ENCODE measurements at regions of chr4 and their contacts with region 1.

Region 1: GRCh38 chr4:876780-877179 is 50.9 kb upstream of the CPLX1 start:
- DNase-seq: no peak
- H3K4me3 Mint-ChIP-seq: no peak overlapping the region
- H3K27ac Mint-ChIP-seq: no peak overlapping the region
- H3K4me1 Mint-ChIP-seq: peaks cover 27% of the 10 kb centered on the region
- H3K27me3 Mint-ChIP-seq: no peaks in the 10 kb centered on the region

Region 2: DNA sequence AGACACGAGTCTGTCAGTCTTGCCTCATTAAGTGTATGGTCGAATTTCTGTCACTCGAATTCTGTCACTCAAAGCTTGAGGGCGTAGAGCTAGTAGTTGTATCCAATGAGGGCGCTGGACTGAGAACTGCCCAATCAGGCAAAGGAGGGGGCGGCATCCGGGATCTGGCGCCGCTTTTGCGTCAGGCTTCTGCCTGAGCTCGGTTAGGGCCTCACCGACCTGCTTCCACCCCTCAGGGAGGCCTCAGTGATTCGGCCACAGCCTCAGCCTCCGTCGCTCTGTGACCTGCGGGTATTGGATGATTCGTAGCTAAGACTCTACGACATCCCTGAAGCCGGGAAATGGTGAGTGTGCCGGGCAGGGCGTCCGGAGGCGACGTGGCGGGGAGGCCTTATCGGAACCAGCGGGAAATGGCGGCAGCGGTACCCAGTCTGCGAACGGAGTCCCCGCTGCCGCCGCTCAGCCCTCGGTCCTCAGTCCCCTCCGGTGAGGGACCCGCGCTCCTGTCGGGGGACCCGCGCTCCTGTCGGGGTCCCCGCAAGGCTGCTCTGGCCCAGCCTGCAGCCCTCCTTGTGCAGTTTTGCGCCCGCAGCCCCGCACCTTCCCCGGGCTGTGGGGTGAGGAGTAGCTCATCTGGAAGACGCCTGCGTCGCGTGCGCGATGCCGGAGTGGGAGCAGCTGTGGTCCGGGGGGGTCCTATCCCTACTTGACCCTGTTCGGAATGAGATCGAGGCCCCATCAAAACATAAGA is 664.2 kb before region 1 on chr4:
- CTCF ChIA-PET with region 1: no interaction called
- intact Hi-C with region 1: no loop called
- DNase-seq: no peak
- H3K4me3 Mint-ChIP-seq: no peak overlapping the region
- H3K27ac Mint-ChIP-seq: no peak overlapping the region
- H3K4me1 Mint-ChIP-seq: peaks cover 23% of the 10 kb centered on the region
- H3K27me3 Mint-ChIP-seq: no peaks in the 10 kb centered on the region

Region 3: GRCh38 chr4:742742-743311 is 134.0 kb before region 1 on chr4:
- CTCF ChIA-PET with region 1: interaction called, 8 read pairs
- intact Hi-C with region 1: loop called (anchors 2 kb)
- DNase-seq: peak; percentile 85
- H3K4me3 Mint-ChIP-seq: no peak overlapping the region
- H3K27ac Mint-ChIP-seq: no peak overlapping the region
- H3K4me1 Mint-ChIP-seq: peaks cover 1% of the 10 kb centered on the region
- H3K27me3 Mint-ChIP-seq: no peaks in the 10 kb centered on the region

Region 4: GRCh38 chr4:856225-856901 is 20.4 kb before region 1 on chr4:
- CTCF ChIA-PET with region 1: no interaction called
- intact Hi-C with region 1: no loop called
- DNase-seq: no peak
- H3K4me3 Mint-ChIP-seq: no peak overlapping the region
- H3K27ac Mint-ChIP-seq: peak overlapping the region; percentile 31
- H3K4me1 Mint-ChIP-seq: no peaks in the 10 kb centered on the region
- H3K27me3 Mint-ChIP-seq: no peaks in the 10 kb centered on the region

Region 5: GRCh38 chr4:924107-925096 is 47.6 kb after region 1 on chr4:
- CTCF ChIA-PET with region 1: no interaction called
- intact Hi-C with region 1: loop called (anchors 1 kb)
- DNase-seq: peak; percentile 65
- H3K4me3 Mint-ChIP-seq: peak overlapping the region; percentile 7
- H3K27ac Mint-ChIP-seq: peak overlapping the region; percentile 90
- H3K4me1 Mint-ChIP-seq: peaks cover 69% of the 10 kb centered on the region
- H3K27me3 Mint-ChIP-seq: no peaks in the 10 kb centered on the region

Region 6: GRCh38 chr4:1277667-1278335 is 401.0 kb after region 1 on chr4:
- CTCF ChIA-PET with region 1: no interaction called
- intact Hi-C with region 1: no loop called
- DNase-seq: no peak
- H3K4me3 Mint-ChIP-seq: no peak overlapping the region
- H3K27ac Mint-ChIP-seq: no peak overlapping the region
- H3K4me1 Mint-ChIP-seq: no peaks in the 10 kb centered on the region
- H3K27me3 Mint-ChIP-seq: no peaks in the 10 kb centered on the region

Measured in activated naive CD4-positive, alpha-beta T cell treated with anti-CD3 and anti-CD28 coated beads for 36 hours (primary cell).